Activated T-helper 1 cell treated with anti-CD3 and anti-CD28 coated beads, Interleukin-12 subunit alpha, Interleukin-12 subunit beta, Interleukin-2, Interleukin-4 antibody, amounts not matched to agents 30 ng/mL and 10 ng/mL and 1 ng/mL, durations not matched to agents 14 hours and 24 hours and 36 hours (primary cell): ENCODE measurements at regions of chr11 and their contacts with region 1.

Region 1: DNA sequence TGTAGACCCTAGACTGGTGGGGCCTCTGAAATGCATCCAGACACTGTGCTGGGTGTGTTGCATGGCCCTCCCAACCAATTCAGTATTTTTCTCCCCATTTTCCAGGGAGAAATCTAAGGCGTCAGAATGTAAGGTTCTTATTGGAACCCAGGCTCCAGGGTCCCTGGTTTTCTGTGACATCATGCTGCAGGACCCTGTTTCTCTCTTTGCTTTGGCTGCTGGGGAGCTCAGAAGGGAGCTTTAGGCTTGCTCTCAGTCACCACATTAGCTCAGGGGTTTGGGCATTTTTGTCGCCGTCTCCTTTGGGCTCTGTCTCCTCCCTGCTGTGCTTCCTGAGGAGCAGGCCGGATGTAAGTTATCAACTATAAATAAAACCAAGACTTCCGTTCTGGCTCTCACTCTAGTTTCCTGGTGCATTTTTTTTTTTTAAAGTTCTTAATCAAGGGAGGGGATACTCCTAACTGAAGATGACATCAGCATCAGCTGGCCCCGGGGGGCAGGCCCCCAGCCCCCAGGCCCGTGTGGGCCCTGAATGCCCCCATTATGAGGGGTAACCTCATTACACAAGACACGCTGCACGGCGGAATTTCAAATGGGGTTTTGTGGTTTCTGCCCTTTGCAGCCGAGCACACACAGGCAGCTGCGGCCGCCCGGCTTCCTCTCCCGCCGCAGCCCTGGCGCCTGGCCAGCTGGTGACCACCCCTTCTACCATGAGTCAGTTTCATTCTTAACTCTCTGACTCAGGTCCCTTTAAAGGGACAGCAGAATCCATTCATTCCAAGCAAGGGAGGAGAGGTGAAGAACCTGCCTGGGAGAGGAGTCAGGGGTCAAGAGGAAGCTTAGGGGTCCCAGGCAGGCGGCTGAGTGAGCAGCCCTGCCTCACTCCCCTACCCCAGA is 3.2 kb downstream of the MYEOV start:
- DNase-seq: peak; percentile 77
- H3K4me3 Mint-ChIP-seq: peak overlapping the region; percentile 82
- H3K27ac Mint-ChIP-seq: peak overlapping the region; percentile 97
- H3K4me1 Mint-ChIP-seq: peaks cover 64% of the 10 kb centered on the region
- H3K27me3 Mint-ChIP-seq: peaks cover 6% of the 10 kb centered on the region

Region 2: GRCh38 chr11:69122642-69123431 is 174.3 kb before region 1 on chr11:
- intact Hi-C with region 1: loop called (anchors 1 kb)
- DNase-seq: peak; percentile 40
- H3K4me3 Mint-ChIP-seq: peak overlapping the region; percentile 59
- H3K27ac Mint-ChIP-seq: peak overlapping the region; percentile 5
- H3K4me1 Mint-ChIP-seq: peaks cover 36% of the 10 kb centered on the region
- H3K27me3 Mint-ChIP-seq: peaks cover 2% of the 10 kb centered on the region

Region 3: DNA sequence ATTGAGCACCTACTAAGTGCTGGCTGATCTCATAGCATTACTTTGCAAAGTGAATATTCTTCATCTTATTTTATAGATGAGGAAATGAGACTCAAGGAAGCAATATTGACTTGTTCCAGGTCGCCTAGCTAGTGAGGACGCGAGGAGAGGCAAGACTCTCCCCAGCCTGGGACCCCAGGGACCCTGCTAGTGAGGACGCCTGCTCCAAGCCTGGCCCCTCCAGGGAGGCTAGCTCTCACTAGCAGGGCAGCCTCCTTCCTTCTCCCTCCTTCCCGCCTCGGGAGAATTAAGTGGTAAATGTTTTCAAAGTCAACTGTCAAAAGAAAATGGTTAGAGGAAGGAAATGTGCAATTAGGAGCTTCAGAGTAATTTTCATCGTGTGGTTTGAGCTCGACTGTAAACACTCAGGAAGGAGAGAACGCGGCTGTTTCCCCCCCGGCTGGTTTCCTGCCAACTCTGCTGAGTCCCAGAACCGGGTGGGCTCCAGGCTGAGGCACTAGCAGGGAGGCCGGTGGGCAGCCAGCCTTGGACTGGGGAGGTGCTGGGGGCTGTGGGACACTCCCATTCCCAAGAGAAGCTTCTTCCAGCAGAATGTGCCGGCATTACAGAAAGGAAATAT is 14.7 kb after region 1 on chr11:
- intact Hi-C with region 1: loop called (anchors 1 kb)
- DNase-seq: no peak
- H3K4me3 Mint-ChIP-seq: peak overlapping the region; percentile 27
- H3K27ac Mint-ChIP-seq: peak overlapping the region; percentile 90
- H3K4me1 Mint-ChIP-seq: peaks cover 45% of the 10 kb centered on the region
- H3K27me3 Mint-ChIP-seq: no peaks in the 10 kb centered on the region

Region 4: GRCh38 chr11:69352715-69353325 is 55.7 kb after region 1 on chr11:
- intact Hi-C with region 1: loop called (anchors 5 kb)
- DNase-seq: no peak
- H3K4me3 Mint-ChIP-seq: no peak overlapping the region
- H3K27ac Mint-ChIP-seq: peak overlapping the region; percentile 43
- H3K4me1 Mint-ChIP-seq: peaks cover 10% of the 10 kb centered on the region
- H3K27me3 Mint-ChIP-seq: peaks cover 1% of the 10 kb centered on the region

Region 5: GRCh38 chr11:69546735-69547370 is 249.7 kb after region 1 on chr11:
- intact Hi-C with region 1: loop called (anchors 1 kb)
- DNase-seq: no peak
- H3K4me3 Mint-ChIP-seq: no peak overlapping the region
- H3K27ac Mint-ChIP-seq: no peak overlapping the region
- H3K4me1 Mint-ChIP-seq: peaks cover 10% of the 10 kb centered on the region
- H3K27me3 Mint-ChIP-seq: peaks cover 9% of the 10 kb centered on the region

Region 6: GRCh38 chr11:70212227-70212811 is 915.2 kb after region 1 on chr11:
- intact Hi-C with region 1: no loop called
- DNase-seq: no peak
- H3K4me3 Mint-ChIP-seq: no peak overlapping the region
- H3K27ac Mint-ChIP-seq: no peak overlapping the region
- H3K4me1 Mint-ChIP-seq: peaks cover 15% of the 10 kb centered on the region
- H3K27me3 Mint-ChIP-seq: no peaks in the 10 kb centered on the region